Caco-2 (cell line): ENCODE measurements at regions of chr1 and their contacts with region 1.

Region 1: DNA sequence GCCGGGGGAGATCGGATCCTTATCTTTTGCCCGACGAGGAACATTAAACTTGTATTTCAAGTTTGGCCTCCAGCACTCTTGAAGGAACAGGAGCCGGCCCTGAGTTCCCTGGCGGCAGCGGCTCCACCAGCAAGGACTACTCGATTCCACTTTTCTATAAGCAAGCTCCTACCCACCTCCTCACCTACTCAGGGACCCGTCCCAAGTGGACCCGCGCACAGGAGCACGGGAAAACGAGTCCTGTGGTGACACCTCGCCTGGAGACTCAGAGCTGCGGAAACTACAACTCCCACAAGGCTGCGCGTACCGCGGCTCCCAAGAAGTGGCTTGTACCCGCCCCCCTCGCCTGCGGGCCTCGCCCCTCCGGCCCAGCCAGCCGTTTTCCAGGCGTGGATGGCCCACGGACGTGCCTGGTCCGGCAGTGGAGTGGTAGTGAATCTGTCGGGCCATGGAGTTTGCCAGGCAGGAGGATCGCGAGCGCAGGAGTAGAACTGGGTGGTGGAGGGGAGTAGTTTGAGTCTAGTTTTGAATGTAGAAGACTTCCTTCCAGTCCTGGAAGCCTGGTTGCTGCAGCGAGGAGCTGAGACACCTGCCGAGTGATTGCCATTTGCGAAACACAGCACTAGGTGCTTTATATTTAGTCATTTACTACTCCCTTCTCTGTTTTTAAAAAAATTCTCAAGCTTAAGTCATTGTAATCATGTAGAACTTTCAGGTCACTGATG is at the start of gene ACP6:
- DNase-seq: peak; percentile 96 to 97
- H3K4me3 ChIP-seq: peak within 1 kb of the TSS; percentile 81
- H3K4me3 Mint-ChIP-seq: peak within 1 kb of the TSS; percentile 93
- H3K27ac Mint-ChIP-seq: peak within 1 kb of the TSS; percentile 86
- H3K4me1 ChIP-seq: peaks cover 7% of the 10 kb centered on the region; the same call in 1 of the 2 replicates
- H3K4me1 Mint-ChIP-seq: peaks cover 15% of the 10 kb centered on the region
- H3K27me3 ChIP-seq: no peaks in the 10 kb centered on the region
- H3K27me3 Mint-ChIP-seq: no peaks in the 10 kb centered on the region
- CTCF ChIP-seq: no peak
- total RNA-seq, gene ACP6: 24.6 and 26.7 TPM in 2 replicates

Region 2: DNA sequence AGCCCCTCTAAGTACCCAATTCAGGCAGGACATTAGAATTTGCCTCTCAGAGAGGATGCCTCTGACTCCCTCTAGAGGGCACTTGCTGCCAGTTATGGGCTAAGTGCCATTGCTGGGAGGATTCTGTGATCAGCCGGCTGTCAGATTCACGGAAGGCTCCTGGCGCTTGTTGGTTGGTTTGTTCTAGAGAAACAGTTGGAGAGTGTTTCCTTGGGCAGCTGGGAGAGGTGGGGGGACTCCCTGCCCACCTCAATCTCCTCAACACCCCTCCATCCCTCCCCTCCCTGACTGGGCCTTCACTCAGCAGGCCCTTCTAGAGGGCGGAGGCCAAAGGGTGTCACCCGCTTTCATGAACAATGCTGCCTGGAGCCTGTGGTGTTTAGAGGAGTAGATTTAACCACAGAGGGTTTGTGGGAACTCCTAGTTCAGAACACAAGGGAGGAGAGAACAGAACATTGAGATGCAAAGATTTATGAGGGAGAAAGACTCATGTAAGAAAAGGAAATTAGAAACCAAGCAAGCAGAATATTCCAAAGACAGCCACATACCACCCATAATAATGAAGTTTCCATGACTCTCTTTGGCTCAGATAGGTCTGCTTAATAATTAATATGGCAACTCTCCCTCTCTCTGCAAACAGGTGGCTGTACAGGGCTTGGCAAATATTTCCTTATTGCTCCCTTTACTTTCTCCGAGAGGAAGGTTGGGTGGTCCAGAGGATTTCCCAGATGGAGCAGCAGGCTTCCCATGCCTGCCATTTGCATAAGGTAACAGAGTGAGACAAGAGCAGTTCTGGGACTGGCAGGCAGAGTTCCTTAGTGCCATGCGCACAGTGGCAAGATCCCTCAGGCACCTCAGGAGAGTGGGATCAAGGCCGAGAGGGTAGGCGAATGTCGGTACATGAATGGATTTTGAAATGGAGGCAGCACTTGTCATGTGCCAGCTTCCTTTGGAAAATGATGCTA is 29.8 kb after region 1 on chr1:
- CTCF ChIA-PET with region 1: no interaction called
- POLR2A ChIA-PET with region 1: no interaction called
- intact Hi-C with region 1: loop called (anchors 2 kb)
- DNase-seq: peak; percentile 49 to 63
- H3K4me3 ChIP-seq: no peak overlapping the region
- H3K4me3 Mint-ChIP-seq: no peak overlapping the region
- H3K27ac Mint-ChIP-seq: no peak overlapping the region
- H3K4me1 ChIP-seq: no peaks in the 10 kb centered on the region
- H3K4me1 Mint-ChIP-seq: no peaks in the 10 kb centered on the region
- H3K27me3 ChIP-seq: no peaks in the 10 kb centered on the region
- H3K27me3 Mint-ChIP-seq: no peaks in the 10 kb centered on the region
- CTCF ChIP-seq: peak; percentile 83 to 88

Region 3: GRCh38 chr1:147757015-147758000 is 86.8 kb after region 1 on chr1:
- CTCF ChIA-PET with region 1: no interaction called
- POLR2A ChIA-PET with region 1: no interaction called
- intact Hi-C with region 1: no loop called
- DNase-seq: peak in 1 of 2 experiments; percentile 60
- H3K4me3 ChIP-seq: no peak overlapping the region
- H3K4me3 Mint-ChIP-seq: no peak overlapping the region
- H3K27ac Mint-ChIP-seq: no peak overlapping the region
- H3K4me1 ChIP-seq: peaks cover 35% of the 10 kb centered on the region
- H3K4me1 Mint-ChIP-seq: peaks cover 29% of the 10 kb centered on the region
- H3K27me3 ChIP-seq: no peaks in the 10 kb centered on the region
- H3K27me3 Mint-ChIP-seq: no peaks in the 10 kb centered on the region
- CTCF ChIP-seq: no peak